OCI-LY7 (cell line): ENCODE measurements at regions of chr13 and their contacts with region 1.

Region 1: GRCh38 chr13:41652727-41653361 is 195.5 kb downstream of the RGCC start:
- DNase-seq: peak; percentile 79
- H3K4me3 ChIP-seq: no peak overlapping the region
- H3K27ac ChIP-seq: peak overlapping the region; percentile 62
- H3K4me1 ChIP-seq: peaks cover 54% of the 10 kb centered on the region
- CTCF ChIP-seq: peak; percentile 98

Region 2: GRCh38 chr13:41075034-41075433 is 577.8 kb before region 1 on chr13:
- CTCF ChIA-PET with region 1: no interaction called
- POLR2A ChIA-PET with region 1: no interaction called
- intact Hi-C with region 1: loop called (anchors 10 kb)
- DNase-seq: peak; percentile 66
- H3K4me3 ChIP-seq: no peak overlapping the region
- H3K27ac ChIP-seq: no peak overlapping the region
- H3K4me1 ChIP-seq: no peaks in the 10 kb centered on the region
- CTCF ChIP-seq: peak; percentile 87

Region 3: GRCh38 chr13:41352935-41353840 is 299.7 kb before region 1 on chr13:
- CTCF ChIA-PET with region 1: no interaction called
- POLR2A ChIA-PET with region 1: no interaction called
- intact Hi-C with region 1: loop called (anchors 1 kb)
- DNase-seq: peak; percentile 63
- H3K4me3 ChIP-seq: peak overlapping the region; percentile 27
- H3K27ac ChIP-seq: no peak overlapping the region
- H3K4me1 ChIP-seq: peaks cover 10% of the 10 kb centered on the region
- CTCF ChIP-seq: peak; percentile 94

Region 4: GRCh38 chr13:41384755-41385503 is 267.9 kb before region 1 on chr13:
- CTCF ChIA-PET with region 1: interaction called, 3 read pairs
- POLR2A ChIA-PET with region 1: interaction called, 7 read pairs
- intact Hi-C with region 1: loop called (anchors 1 kb)
- DNase-seq: peak; percentile 42
- H3K4me3 ChIP-seq: no peak overlapping the region
- H3K27ac ChIP-seq: no peak overlapping the region
- H3K4me1 ChIP-seq: peaks cover 4% of the 10 kb centered on the region
- CTCF ChIP-seq: peak; percentile 82

Region 5: GRCh38 chr13:41411522-41411921 is 241.3 kb before region 1 on chr13:
- CTCF ChIA-PET with region 1: interaction called, 3 read pairs
- POLR2A ChIA-PET with region 1: interaction called, 5 read pairs
- intact Hi-C with region 1: loop called (anchors 1 kb)
- DNase-seq: peak; percentile 65
- H3K4me3 ChIP-seq: no peak overlapping the region
- H3K27ac ChIP-seq: no peak overlapping the region
- H3K4me1 ChIP-seq: peaks cover 9% of the 10 kb centered on the region
- CTCF ChIP-seq: peak; percentile 76

Region 6: GRCh38 chr13:41428155-41428554 is 224.7 kb before region 1 on chr13:
- CTCF ChIA-PET with region 1: no interaction called
- POLR2A ChIA-PET with region 1: no interaction called
- intact Hi-C with region 1: no loop called
- DNase-seq: no peak
- H3K4me3 ChIP-seq: no peak overlapping the region
- H3K27ac ChIP-seq: no peak overlapping the region
- H3K4me1 ChIP-seq: no peaks in the 10 kb centered on the region
- CTCF ChIP-seq: no peak

Region 7: GRCh38 chr13:41601718-41602445 is 51.0 kb before region 1 on chr13:
- CTCF ChIA-PET with region 1: no interaction called
- POLR2A ChIA-PET with region 1: no interaction called
- intact Hi-C with region 1: no loop called
- DNase-seq: no peak
- H3K4me3 ChIP-seq: no peak overlapping the region
- H3K27ac ChIP-seq: no peak overlapping the region
- H3K4me1 ChIP-seq: no peaks in the 10 kb centered on the region
- CTCF ChIP-seq: no peak

Region 8: DNA sequence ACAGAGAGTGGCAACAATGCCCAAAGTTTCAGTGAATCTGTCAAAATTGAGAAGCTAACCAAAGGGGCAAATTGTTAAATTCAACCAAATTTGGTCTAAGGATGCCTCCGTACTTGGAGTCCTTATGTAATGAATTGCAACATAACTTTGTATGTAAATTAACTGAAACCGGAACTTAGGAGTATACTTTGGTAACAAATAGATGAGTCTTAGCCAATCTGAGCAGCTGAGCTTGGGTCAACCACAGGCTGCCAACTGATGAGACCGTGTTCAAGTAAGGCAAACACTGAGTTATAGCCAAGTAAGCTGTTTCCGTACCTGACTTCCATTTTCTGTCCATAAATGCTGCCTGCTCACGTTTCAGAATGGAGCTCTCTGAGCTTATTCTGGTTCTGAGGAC is 302.8 kb after region 1 on chr13:
- CTCF ChIA-PET with region 1: no interaction called
- POLR2A ChIA-PET with region 1: no interaction called
- intact Hi-C with region 1: no loop called
- DNase-seq: no peak
- H3K4me3 ChIP-seq: no peak overlapping the region
- H3K27ac ChIP-seq: no peak overlapping the region
- H3K4me1 ChIP-seq: peaks cover 37% of the 10 kb centered on the region
- CTCF ChIP-seq: no peak